ENCODE measurements at regions of chr2 and their contacts with region 1.

Region 1: DNA sequence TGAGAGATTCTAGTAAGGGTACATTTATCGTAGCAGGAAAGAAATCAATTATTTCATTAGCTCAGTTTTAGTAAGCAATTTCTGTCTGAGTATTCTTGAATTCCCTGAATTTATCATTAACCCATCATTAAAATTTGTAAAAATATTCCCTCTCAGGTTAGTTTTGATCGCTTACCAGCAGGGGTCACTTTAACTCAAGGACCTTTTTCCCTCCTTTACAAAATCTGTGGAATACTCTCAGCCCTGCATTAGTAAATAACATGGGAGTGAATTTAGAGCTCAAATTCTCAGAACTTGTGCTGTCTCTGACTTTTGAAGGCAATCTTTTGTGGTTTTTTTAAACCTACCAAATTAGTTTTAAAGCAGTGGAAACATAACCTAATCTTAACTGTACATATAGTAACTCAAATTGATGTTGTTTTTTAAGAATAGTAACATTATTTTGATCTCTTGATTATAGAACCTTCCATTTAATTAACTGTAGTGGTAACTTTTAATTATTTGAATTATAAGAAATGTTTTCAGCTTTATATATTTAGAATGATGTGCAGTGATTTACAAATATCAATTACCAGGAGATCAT is 97.2 kb downstream of the AGPS start:
- DNase-seq: no peak
- H3K4me3 Mint-ChIP-seq: no peak overlapping the region
- H3K27ac Mint-ChIP-seq: no peak overlapping the region
- H3K4me1 Mint-ChIP-seq: no peaks in the 10 kb centered on the region
- H3K27me3 Mint-ChIP-seq: no peaks in the 10 kb centered on the region

Region 2: DNA sequence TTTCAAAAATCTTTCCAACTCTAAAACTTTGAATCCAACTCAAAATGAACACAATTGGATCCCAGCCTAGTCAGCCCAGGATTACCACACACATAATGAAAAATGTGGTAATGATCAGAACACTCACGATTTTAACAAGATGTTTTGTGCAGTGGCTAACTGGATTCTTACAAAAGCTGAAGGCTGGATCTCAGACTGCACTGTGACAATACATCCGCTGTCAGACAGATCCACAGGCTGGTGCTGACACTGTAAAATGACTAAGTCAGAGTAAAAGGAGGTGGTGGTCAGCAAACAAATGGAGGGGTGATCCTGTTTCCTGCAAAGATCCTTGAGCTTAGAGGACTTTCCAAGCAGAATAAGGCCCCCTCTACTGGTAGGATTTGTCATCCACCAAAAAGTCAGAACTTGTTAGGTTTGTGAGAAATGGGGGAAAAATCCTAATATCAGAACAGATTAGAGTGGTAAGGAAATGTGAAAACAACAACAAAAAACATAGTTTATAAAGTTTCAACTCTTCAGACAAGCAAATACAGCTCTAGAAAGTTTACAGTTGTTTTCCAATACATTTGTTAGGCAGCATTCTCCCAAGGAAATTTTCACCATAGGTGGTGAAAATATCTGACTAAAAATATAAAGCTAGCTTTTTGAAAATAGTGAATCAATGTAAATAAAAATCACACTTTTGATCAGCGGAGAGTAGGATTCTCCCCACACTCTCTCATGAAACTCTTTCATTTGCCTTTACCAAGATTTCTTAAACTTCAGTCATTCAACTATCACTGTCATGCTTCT is 114.7 kb after region 1 on chr2:
- intact Hi-C with region 1: loop called (anchors 10 kb)
- DNase-seq: no peak
- H3K4me3 Mint-ChIP-seq: no peak overlapping the region
- H3K27ac Mint-ChIP-seq: no peak overlapping the region
- H3K4me1 Mint-ChIP-seq: no peaks in the 10 kb centered on the region
- H3K27me3 Mint-ChIP-seq: peaks cover 4% of the 10 kb centered on the region

Measured in activated CD4-positive, alpha-beta T cell treated with anti-CD3 and anti-CD28 coated beads, Interleukin-2, amount 10 ng/mL, durations not matched to agents 24 days and 14 days (primary cell).